ENCODE measurements at regions of chr12 and their contacts with region 1.

Region 1: DNA sequence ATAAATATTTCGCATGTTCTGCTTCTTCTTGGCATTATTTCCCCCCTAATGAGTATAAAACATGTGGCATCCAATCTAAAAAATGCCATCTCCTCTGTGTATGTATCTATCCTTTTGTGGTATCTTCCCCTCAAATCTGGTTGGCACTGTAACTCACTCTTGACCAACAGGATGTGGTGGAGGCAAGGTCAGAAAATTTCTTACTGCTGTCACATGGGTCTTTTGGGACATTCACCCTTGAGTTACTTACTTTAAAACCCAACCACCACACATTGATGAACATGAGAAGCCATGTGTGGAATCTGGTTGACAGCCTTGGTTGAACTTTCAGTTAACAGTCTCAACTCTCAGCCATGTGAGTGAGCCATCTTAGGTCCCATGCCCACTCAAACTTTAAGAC is 516.9 kb downstream of the SLC16A7 start:
- DNase-seq: no peak
- ATAC-seq: no peak
- H3K4me3 ChIP-seq: no peak overlapping the region
- H3K27ac ChIP-seq: no peak overlapping the region
- H3K4me1 ChIP-seq: no peaks in the 10 kb centered on the region
- H3K27me3 ChIP-seq: no peaks in the 10 kb centered on the region
- CTCF ChIP-seq: no peak

Region 2: GRCh38 chr12:59904874-59905521 is 207.8 kb before region 1 on chr12:
- intact Hi-C with region 1: no loop called
- DNase-seq: no peak
- ATAC-seq: no peak
- H3K4me3 ChIP-seq: no peak overlapping the region
- H3K27ac ChIP-seq: no peak overlapping the region
- H3K4me1 ChIP-seq: no peaks in the 10 kb centered on the region
- H3K27me3 ChIP-seq: no peaks in the 10 kb centered on the region
- CTCF ChIP-seq: no peak

Region 3: DNA sequence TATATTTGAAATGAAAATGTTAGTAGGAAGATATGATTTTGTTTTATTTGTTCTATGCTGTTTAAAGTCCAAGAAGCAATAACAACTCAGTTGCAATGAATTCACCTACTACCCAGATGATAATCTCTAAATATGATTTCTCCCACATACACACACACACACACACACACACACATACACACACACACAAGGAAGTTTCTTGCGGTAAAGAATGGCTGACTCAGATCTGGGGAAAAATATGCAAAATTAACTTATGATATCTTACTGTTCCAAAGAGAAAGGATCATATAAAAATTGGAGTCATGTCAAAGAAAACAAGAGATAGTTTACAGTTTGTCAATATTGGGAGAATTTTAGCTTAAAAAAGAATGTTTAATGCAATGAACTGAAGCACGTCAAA is 60.3 kb before region 1 on chr12:
- intact Hi-C with region 1: no loop called
- DNase-seq: no peak
- ATAC-seq: no peak
- H3K4me3 ChIP-seq: no peak overlapping the region
- H3K27ac ChIP-seq: no peak overlapping the region
- H3K4me1 ChIP-seq: no peaks in the 10 kb centered on the region
- H3K27me3 ChIP-seq: no peaks in the 10 kb centered on the region
- CTCF ChIP-seq: no peak

Region 4: DNA sequence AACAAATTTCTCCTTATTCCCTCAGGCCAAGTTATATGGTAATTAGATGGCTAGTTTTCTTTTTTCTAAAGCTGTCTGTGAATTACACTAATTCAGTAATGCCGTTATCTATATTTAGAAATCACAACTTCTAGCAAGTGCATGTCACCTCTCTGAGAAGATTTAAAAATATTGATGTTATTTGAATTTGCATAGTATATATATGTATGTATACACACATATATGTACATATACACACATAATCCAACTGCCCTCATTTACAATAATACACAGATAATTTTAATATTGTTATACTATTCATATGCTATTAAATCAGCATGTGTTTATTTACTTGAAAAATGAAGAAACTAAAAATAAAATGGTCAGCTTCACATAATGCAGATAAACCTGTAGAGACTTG is 47.0 kb after region 1 on chr12:
- intact Hi-C with region 1: loop called in 1 of 2 experiments (anchors 5 kb)
- DNase-seq: no peak
- ATAC-seq: no peak
- H3K4me3 ChIP-seq: no peak overlapping the region
- H3K27ac ChIP-seq: no peak overlapping the region
- H3K4me1 ChIP-seq: no peaks in the 10 kb centered on the region
- H3K27me3 ChIP-seq: no peaks in the 10 kb centered on the region
- CTCF ChIP-seq: no peak